Activated CD4-positive, alpha-beta T cell treated with anti-CD3 and anti-CD28 coated beads for 36 hours (primary cell): ENCODE measurements at regions of chr3 and their contacts with region 1.

Region 1: DNA sequence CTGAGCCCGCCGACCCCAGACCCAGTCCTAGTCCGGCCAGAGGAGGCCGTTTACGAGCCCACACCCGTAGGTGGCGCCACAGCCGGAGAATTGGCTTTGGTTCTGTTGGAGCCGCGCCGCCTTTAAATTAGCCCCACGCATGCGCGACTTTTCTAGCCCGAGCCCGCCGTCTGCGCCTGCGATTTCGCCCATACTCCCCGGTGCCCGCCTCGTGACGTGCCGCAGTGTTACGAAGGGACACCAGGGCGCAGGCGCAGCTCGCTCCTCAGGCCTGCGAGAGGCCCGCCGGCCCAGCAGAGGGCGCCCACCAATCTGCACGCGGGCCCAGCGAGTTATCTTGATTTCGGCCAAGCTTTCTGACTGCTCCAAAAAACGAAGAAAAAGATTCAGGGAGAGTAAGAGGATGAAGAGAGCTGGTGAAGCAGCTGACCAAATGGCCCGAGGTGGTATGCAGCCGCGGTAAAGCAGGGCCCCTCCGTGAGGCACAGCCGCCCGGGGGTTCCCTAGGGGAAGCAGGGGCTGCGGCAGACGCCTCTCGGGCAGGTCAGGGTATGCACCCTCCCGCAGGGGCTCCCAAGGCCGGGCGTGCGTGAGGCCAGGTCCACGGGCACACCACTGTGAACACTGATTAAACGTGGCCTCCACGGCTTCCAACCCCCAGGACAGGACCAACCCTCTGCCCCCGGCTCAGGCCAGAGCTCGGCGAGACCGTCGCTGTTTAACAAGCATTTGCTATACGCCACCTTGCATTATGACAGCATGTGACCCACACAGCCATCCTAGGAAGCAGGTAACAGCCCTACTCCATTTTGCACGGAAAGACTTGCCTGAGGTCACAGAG is 32.8 kb downstream of the RPN1 start:
- DNase-seq: peak; percentile 100
- ATAC-seq: peak; percentile 86
- H3K4me3 Mint-ChIP-seq: peak overlapping the region; percentile 92
- H3K27ac Mint-ChIP-seq: peak overlapping the region; percentile 97
- H3K4me1 Mint-ChIP-seq: peaks cover 33% of the 10 kb centered on the region
- H3K27me3 Mint-ChIP-seq: no peaks in the 10 kb centered on the region

Region 2: DNA sequence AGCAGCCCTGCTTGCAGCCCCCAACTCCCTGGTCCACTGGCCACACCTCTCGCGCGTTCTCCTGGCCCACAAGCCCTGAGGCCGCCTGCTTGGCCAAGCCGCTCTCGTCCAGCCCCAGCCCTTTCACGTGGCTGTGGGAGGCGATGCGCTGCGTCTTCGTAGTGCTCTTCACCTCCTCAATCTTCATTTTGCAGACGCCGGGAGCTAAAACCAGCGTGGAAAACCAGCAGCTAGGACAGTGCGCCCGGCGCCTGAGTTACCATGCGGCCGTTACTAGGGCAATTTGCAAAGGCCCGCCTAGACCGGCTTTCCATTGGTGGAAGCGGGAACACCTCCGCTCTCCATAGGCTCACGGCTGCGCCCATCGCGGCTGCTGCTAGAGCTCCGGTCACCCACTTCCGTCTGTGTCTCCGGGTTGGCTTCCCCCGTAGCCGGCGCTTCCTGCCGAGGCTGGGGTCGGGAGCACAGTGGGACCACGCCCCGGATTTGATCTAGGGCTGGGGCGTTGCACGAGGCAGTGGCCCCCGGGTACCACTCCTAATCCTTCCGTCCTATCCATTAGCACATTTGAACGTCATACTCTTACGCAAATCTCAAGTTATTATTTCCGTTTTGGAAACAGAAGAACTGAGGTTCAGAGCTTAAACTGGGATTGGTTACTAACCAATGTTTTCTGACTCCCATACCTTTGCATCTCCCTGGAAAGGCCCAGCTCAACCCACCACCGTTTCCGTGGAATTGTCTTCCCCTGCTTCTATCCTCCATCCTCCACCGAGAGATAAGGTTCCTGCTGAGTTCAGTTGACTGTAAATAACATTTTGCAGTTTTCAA is 494.0 kb before region 1 on chr3 and contains the start of gene RUVBL1:
- CTCF ChIA-PET with region 1: no interaction called
- POLR2A ChIA-PET with region 1: no interaction called
- intact Hi-C with region 1: loop called in 1 of 2 experiments (anchors 1 kb)
- DNase-seq: peak; percentile 99
- ATAC-seq: peak; percentile 99
- H3K4me3 Mint-ChIP-seq: peak within 1 kb of the TSS; percentile 99
- H3K27ac Mint-ChIP-seq: peak within 1 kb of the TSS; percentile 96
- H3K4me1 Mint-ChIP-seq: peaks cover 30% of the 10 kb centered on the region
- H3K27me3 Mint-ChIP-seq: no peaks in the 10 kb centered on the region
- total RNA-seq, gene RUVBL1: 97.0 to 99.9 TPM

Region 3: GRCh38 chr3:128549283-128550112 is 68.3 kb before region 1 on chr3:
- CTCF ChIA-PET with region 1: no interaction called
- POLR2A ChIA-PET with region 1: no interaction called
- intact Hi-C with region 1: no loop called
- DNase-seq: no peak
- ATAC-seq: no peak
- H3K4me3 Mint-ChIP-seq: no peak overlapping the region
- H3K27ac Mint-ChIP-seq: no peak overlapping the region
- H3K4me1 Mint-ChIP-seq: peaks cover under 1% of the 10 kb centered on the region
- H3K27me3 Mint-ChIP-seq: peaks cover 32% of the 10 kb centered on the region

Region 4: GRCh38 chr3:128650096-128651050 is 32.6 kb after region 1 on chr3 and contains the start of gene RPN1:
- CTCF ChIA-PET with region 1: interaction called, 11 read pairs
- POLR2A ChIA-PET with region 1: interaction called, 4 read pairs
- intact Hi-C with region 1: loop called (anchors 1 kb)
- DNase-seq: peak; percentile 97
- ATAC-seq: peak; percentile 97
- H3K4me3 Mint-ChIP-seq: peak within 1 kb of the TSS; percentile 81
- H3K27ac Mint-ChIP-seq: peak within 1 kb of the TSS; percentile 85
- H3K4me1 Mint-ChIP-seq: peaks cover 39% of the 10 kb centered on the region
- H3K27me3 Mint-ChIP-seq: no peaks in the 10 kb centered on the region
- total RNA-seq, gene RPN1: 138 to 153 TPM

Region 5: GRCh38 chr3:128725932-128726690 is 108.3 kb after region 1 on chr3 and contains the start of gene RAB7A:
- CTCF ChIA-PET with region 1: interaction called, 3 read pairs
- POLR2A ChIA-PET with region 1: no interaction called
- intact Hi-C with region 1: loop called in 1 of 2 experiments (anchors 1 kb)
- DNase-seq: peak; percentile 99
- ATAC-seq: peak; percentile 92
- H3K4me3 Mint-ChIP-seq: peak within 1 kb of the TSS; percentile 89
- H3K27ac Mint-ChIP-seq: peak within 1 kb of the TSS; percentile 92
- H3K4me1 Mint-ChIP-seq: peaks cover 52% of the 10 kb centered on the region
- H3K27me3 Mint-ChIP-seq: no peaks in the 10 kb centered on the region
- total RNA-seq, gene RAB7A: 297 to 534 TPM

Region 6: DNA sequence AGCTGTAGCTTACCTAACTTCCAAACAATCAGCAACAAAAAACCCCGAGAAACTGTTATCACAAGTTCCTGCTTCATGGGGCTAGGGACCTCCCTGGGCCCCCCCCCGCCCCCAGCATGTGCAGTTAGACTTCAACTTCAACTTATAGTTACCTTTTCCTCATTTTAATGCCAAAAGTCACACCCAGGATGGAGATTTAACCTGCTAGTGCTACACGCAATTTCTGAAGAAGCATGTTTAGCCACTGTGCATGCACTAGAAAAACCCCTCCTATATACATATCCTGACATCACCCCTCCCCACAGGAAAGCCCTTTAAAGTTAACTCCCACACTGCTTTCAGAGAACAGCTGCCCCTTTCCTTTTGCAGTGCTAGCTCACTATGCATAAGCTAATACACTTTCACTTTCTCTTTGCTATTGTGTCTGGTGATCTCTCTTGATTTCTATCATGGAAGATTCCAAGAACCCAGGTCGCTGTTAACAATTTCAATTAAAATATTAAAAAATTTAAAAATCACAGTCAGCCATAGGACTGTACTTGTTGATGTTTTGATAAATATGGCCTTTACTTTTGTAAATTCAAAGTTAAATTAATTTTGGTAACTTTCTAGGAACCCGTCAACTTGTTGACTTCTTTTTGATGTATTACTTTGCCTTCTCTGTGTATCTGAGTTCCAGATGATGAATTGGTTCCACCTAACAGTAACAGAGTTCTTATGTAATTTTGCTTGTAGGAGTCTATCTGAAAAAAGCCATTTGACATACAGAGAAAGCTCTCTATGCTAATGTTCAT is 186.4 kb after region 1 on chr3:
- CTCF ChIA-PET with region 1: interaction called, 10 read pairs
- POLR2A ChIA-PET with region 1: interaction called, 3 read pairs
- intact Hi-C with region 1: loop called (anchors 1 to 2 kb)
- DNase-seq: peak; percentile 78
- ATAC-seq: peak; percentile 76
- H3K4me3 Mint-ChIP-seq: peak overlapping the region; percentile 69
- H3K27ac Mint-ChIP-seq: peak overlapping the region; percentile 97
- H3K4me1 Mint-ChIP-seq: peaks cover 86% of the 10 kb centered on the region
- H3K27me3 Mint-ChIP-seq: no peaks in the 10 kb centered on the region

Region 7: DNA sequence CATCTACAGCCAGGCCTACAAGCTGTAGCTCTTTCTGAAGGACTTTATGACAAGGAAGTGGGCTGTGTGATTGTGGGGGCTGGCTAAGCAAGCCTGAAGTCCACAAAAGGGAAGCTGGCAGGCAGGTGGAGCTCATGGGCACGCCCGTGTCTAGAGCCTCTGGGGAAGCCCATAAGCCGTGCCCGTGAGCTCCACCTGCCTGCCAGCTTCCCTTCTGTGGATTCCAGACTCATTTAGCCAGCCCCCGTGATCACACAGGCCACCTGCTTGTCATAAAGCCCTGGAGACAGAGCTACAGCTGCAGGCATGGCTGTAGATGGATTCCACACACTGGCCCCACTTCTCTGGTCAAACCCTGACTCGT is 398.6 kb after region 1 on chr3:
- CTCF ChIA-PET with region 1: no interaction called
- POLR2A ChIA-PET with region 1: no interaction called
- intact Hi-C with region 1: no loop called
- DNase-seq: peak; percentile 80
- ATAC-seq: peak; percentile 84
- H3K4me3 Mint-ChIP-seq: peak overlapping the region; percentile 63
- H3K27ac Mint-ChIP-seq: peak overlapping the region; percentile 96
- H3K4me1 Mint-ChIP-seq: peaks cover 36% of the 10 kb centered on the region
- H3K27me3 Mint-ChIP-seq: no peaks in the 10 kb centered on the region

Region 8: DNA sequence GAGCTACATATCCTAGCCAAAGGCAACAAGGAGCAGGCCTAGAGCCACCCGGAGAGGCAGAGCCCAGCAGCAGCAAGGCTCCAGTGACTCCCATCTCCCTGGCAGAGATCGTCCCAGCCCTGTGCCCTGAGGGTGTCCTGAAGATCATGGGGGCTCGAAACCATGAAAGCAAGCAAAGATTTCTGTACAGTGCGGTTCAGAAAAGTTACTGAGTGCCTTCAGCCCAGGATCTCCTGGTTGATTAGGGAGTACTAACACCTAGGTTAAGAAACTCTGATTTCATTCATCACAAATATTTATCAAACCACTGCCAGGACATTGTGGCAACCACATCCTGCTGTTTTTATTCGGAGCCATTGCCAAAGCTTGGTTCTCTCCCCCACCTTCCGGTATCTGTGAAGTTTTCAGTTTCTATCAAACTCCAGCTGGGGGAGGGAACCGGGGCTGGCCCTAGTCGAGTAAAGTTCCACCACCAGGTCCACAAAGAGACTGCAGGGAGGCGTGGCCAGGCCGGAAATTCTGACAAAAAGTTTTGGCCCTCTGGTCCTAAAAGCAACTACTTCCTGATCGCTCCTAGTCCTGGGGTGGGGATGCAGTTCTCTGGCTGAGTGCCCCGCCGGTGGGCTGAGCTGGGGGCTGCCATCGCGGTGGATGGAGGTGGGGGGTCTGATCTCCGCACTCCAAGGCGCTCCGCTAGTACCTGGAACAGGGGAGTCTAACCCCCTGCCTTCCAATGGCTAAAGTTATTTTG is 502.7 kb after region 1 on chr3:
- CTCF ChIA-PET with region 1: no interaction called
- POLR2A ChIA-PET with region 1: interaction called, 6 read pairs
- intact Hi-C with region 1: loop called in 1 of 2 experiments (anchors 2 kb)
- DNase-seq: peak; percentile 96
- ATAC-seq: peak; percentile 69
- H3K4me3 Mint-ChIP-seq: peak overlapping the region; percentile 91
- H3K27ac Mint-ChIP-seq: peak overlapping the region; percentile 95
- H3K4me1 Mint-ChIP-seq: peaks cover 46% of the 10 kb centered on the region
- H3K27me3 Mint-ChIP-seq: no peaks in the 10 kb centered on the region

Region 9: DNA sequence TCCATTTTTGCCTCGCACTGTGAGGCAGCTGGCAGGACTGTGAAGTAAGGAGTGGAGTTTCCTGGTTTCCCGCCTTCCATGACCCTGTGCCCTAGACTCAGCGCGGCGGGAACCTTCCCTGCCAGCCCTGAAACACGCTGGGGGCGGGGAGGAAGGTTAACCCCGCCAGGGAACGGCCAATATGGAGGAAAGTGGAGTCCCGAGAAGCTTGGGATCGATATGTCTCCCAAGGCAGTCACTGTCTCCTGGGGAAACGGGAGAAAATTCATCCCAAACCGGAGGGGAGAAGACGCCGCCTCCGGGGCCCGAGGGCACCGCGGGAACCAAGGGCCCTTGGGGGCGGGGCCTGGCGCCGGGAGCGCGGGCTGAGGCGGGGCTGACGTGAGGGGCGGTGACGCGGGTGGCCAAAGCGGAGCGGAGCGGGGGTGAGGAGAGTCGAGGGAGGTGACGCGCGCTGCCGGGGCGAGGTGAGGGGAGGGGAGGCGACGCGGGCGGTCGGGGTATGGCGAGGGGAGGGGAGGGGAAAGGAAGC is 660.7 kb after region 1 on chr3 and contains the start of gene HMCES:
- CTCF ChIA-PET with region 1: no interaction called
- POLR2A ChIA-PET with region 1: no interaction called
- intact Hi-C with region 1: loop called in 1 of 2 experiments (anchors 1 kb)
- DNase-seq: peak; percentile 98
- ATAC-seq: peak; percentile 84
- H3K4me3 Mint-ChIP-seq: peak within 1 kb of the TSS; percentile 89
- H3K27ac Mint-ChIP-seq: peak within 1 kb of the TSS; percentile 95
- H3K4me1 Mint-ChIP-seq: peaks cover 55% of the 10 kb centered on the region
- H3K27me3 Mint-ChIP-seq: no peaks in the 10 kb centered on the region
- total RNA-seq, gene HMCES: 43.1 to 56.7 TPM